Thyroid gland (tissue), 4 donors: ENCODE measurements at regions of chr10 and their contacts with region 1.

Region 1: GRCh38 chr10:73534857-73535256 is 39.0 kb upstream of the PPP3CB start:
- DNase-seq: no peak
- H3K4me3 ChIP-seq: no peak overlapping the region
- H3K27ac ChIP-seq: no peak overlapping the region
- H3K4me1 ChIP-seq: peaks cover 11 to 17% of the 10 kb centered on the region in 2 donors
- H3K27me3 ChIP-seq: no peaks in the 10 kb centered on the region
- CTCF ChIP-seq: no peak
- POLR2A ChIP-seq: no peak

Region 2: DNA sequence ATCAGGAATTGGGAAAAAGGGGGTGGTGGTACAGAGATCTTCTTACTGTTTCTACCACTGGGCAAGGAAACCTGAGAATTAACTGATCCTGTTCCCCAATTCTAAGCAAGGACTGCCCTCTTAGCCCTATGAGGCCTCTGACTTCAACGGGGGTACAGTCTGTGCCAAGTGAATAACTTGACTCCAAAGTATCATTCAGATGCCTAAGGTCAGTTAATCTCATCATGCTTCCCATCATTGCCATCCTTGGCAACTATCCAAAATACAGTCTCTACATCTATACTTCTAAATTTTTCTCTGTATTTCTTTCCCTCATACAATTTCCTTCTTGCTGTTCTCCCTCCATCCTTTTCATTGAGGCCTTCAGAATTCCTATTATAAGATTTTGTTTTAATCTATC is 49.5 kb before region 1 on chr10:
- intact Hi-C with region 1: no loop called
- DNase-seq: no peak
- H3K4me3 ChIP-seq: no peak overlapping the region
- H3K27ac ChIP-seq: no peak overlapping the region
- H3K4me1 ChIP-seq: no peaks in the 10 kb centered on the region
- H3K27me3 ChIP-seq: no peaks in the 10 kb centered on the region
- CTCF ChIP-seq: no peak
- POLR2A ChIP-seq: no peak

Region 3: DNA sequence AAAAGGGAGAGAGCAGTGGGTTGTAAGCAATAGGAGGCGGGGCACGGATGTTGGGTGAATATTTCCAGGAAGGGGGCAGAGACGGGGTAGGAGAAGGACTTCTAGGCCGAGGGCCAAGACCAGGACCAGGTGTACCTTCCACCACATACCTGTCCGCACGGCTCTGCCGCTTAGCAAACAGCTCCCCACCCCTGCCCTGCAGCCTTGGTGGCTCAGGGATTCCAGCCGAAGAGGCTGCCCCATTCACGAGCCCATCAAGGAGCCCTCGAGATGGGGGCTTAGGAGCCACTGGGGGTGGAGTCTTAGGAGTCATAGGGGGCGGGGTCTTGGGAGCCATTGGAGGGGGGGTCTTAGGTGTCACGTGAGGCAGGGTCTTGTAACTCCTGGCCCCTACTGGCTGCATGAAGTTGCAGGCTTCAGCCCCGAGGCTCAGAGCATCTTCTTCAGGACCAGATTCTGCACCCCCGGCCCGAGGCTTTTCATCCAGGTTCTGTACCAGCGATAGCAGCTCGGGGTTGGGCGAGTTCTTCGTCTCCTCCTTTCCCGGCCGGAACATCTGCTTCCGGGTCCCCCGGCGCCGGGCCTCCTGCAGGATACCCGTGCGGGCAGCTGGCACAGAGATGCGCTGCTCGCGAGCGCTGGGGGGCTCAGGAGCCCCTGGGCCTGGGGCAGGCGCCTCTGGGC is 112.5 kb after region 1 on chr10:
- intact Hi-C with region 1: loop called (anchors 5 kb)
- DNase-seq: peak; percentile 62 to 68
- H3K4me3 ChIP-seq: peak overlapping the region; percentile 25 to 91 (median 67)
- H3K27ac ChIP-seq: peak overlapping the region in 1 of 3 donors; percentile 14
- H3K4me1 ChIP-seq: peaks cover 11 to 19% of the 10 kb centered on the region in 2 donors
- H3K27me3 ChIP-seq: no peaks in the 10 kb centered on the region
- CTCF ChIP-seq: no peak
- POLR2A ChIP-seq: no peak